Activated CD4-positive, alpha-beta memory T cell treated with anti-CD3 and anti-CD28 coated beads for 36 hours (primary cell): ENCODE measurements at regions of chr15 and their contacts with region 1.

Region 1: DNA sequence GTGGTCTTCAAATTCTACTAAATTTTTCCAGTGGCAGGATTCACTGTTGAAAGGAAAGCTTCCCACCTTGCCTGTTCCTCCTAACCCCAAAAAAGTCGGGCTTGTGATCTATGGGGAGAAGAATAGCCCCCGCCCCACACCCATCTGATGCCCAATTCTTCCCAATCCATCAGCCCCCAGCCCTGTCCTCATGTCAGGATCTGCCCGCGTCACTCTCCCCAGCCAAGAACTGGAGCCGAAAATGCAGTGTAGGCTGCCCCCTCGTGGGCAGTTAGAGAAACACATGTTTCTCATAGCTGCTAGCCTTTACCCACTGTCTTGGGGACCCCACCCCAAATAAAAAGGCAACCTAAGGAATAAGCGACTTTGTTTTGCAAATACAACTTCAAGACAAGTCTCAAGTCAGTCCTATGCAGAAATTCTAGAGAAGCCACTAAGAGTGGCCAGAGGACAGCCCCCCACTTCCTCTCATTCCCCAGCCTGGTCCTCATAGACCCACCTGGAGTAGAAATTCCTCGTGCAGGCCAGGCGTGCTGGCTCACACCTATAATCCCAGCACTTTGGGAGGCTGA is 13.0 kb upstream of the CSK start:
- DNase-seq: peak; percentile 80
- H3K4me3 Mint-ChIP-seq: no peak overlapping the region
- H3K27ac Mint-ChIP-seq: no peak overlapping the region
- H3K4me1 Mint-ChIP-seq: peaks cover 21% of the 10 kb centered on the region
- H3K27me3 Mint-ChIP-seq: peaks cover 5% of the 10 kb centered on the region

Region 2: DNA sequence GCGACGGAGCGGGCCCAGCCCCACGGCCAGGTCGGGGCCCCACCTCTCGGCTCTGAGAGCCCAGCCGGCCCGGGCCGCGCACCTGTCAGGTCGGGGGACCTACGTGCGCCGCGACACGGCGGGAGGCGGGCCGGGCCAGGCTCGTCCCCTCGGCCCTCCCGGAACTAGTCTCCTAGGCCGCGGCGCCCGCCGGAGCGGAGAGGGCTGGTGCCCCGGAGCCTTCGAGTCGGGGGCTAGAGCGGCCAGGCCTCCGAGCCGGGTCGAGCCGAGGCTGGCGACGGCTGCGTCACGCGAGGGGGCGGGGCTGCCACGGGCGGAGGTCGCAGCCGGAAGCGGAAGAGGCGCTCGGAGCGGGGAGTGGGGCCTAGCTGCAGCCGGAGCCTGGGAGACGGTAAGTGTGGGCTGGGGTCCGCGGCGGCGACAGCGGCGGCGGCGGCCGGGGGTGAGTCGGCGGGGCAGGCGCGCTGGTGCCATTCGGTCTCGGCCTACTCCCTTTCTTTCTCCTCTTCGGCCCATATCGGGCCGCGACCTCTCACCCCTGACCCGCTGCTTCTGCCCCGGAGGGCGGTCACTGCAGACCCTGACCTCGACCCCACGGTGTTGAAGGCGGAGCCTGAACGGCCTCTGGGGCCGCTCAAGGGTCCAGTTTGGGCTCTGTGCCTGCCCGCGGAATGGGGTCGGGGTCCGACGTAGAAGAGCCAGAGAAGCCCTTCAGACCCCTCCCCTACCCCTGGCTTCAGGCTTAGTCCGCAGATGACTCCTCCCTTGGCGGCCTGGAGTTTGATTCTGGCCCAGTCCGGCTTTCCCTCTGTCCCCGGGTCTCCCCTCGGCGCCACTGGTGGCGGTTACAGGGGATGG is 153.1 kb before region 1 on chr15 and contains the start of gene CLK3:
- CTCF ChIA-PET with region 1: interaction called, 88 read pairs
- POLR2A ChIA-PET with region 1: no interaction called
- intact Hi-C with region 1: no loop called
- DNase-seq: peak; percentile 97
- H3K4me3 Mint-ChIP-seq: peak within 1 kb of the TSS; percentile 91
- H3K27ac Mint-ChIP-seq: peak within 1 kb of the TSS; percentile 94
- H3K4me1 Mint-ChIP-seq: peaks cover 35% of the 10 kb centered on the region
- H3K27me3 Mint-ChIP-seq: no peaks in the 10 kb centered on the region
- total RNA-seq, gene CLK3: 118 to 124 TPM

Region 3: GRCh38 chr15:74723754-74724334 is 45.0 kb before region 1 on chr15:
- CTCF ChIA-PET with region 1: interaction called, 11 read pairs
- POLR2A ChIA-PET with region 1: interaction called, 4 read pairs
- intact Hi-C with region 1: no loop called
- DNase-seq: no peak
- H3K4me3 Mint-ChIP-seq: no peak overlapping the region
- H3K27ac Mint-ChIP-seq: no peak overlapping the region
- H3K4me1 Mint-ChIP-seq: peaks cover 8% of the 10 kb centered on the region
- H3K27me3 Mint-ChIP-seq: peaks cover 6% of the 10 kb centered on the region

Region 4: DNA sequence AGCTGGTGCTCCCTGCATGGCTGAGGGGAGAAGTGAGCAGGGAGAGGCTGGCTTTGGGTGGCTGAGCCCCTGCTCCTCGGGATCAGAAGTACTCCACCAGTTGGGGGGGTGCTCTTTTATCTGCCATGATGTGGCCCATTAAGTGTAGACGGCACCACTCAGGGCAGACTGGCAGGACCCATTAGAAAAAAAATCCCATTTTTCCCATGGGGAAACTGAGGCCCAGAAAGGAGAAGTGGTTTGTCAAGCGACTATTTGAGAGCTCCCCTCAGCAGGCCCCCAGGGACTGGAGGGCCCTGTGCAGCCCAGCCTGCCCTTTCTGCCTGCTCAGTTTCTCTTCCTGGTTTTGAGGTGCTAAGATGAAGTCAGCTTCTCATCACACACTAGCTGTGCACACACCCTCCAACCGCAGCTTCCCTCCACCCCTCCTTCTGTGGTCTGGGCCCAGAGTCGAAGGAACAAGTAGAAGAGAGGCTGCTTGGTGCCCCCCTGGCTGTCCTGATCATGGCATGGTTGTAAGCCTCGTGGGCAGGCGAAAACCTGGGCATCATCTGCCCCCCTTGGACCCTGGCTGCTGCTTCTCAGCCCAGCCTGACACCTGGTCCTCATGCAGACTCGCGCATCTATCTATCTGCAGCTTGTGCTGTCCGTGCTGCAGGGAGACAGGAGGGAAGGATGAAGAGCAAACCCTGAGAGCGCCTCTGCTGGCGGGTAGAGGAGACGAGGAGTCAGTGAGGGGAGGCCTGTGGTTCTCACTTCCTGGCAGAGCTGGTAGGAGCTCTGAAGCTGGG is 18.6 kb after region 1 on chr15:
- CTCF ChIA-PET with region 1: interaction called, 1,220 read pairs
- POLR2A ChIA-PET with region 1: interaction called, 13 read pairs
- intact Hi-C with region 1: loop called (anchors 2 kb)
- DNase-seq: peak; percentile 97
- H3K4me3 Mint-ChIP-seq: peak overlapping the region; percentile 90
- H3K27ac Mint-ChIP-seq: peak overlapping the region; percentile 99
- H3K4me1 Mint-ChIP-seq: peaks cover 53% of the 10 kb centered on the region
- H3K27me3 Mint-ChIP-seq: no peaks in the 10 kb centered on the region

Region 5: DNA sequence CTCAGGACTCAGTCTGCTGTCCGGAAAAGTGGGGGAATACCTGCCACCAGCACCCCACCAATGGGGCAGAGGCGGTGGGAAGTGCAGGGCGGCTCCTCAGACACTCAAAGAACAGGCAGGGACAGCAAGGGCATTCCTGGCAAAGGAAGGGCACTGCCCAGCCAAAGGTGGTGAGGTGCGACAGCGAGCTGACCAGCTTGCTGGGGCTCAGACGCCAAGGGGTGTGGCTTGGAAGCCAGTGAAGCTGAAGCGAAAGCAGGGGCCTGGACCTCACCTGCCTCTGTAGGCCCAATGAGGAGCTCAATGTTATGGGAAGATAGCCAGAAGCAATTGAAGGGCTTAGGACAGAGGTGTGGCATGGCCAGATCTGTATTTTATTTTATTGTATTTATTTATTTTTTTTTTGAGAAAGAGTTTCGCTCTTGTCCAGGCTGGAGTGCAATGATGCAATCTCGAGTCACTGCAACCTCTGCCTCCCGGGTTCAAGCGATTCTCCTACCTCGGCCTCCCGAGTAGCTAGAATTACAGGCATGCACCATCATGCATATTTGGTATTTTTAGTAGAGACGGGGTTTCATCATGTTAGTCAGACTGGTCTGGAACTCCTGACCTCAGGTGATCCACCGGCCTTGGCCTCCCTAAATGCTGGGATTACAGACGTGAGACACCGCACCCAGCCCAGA is 39.4 kb after region 1 on chr15:
- CTCF ChIA-PET with region 1: interaction called, 1,220 read pairs
- POLR2A ChIA-PET with region 1: interaction called, 3 read pairs
- intact Hi-C with region 1: no loop called
- DNase-seq: no peak
- H3K4me3 Mint-ChIP-seq: no peak overlapping the region
- H3K27ac Mint-ChIP-seq: peak overlapping the region; percentile 52
- H3K4me1 Mint-ChIP-seq: peaks cover 10% of the 10 kb centered on the region
- H3K27me3 Mint-ChIP-seq: no peaks in the 10 kb centered on the region

Region 6: GRCh38 chr15:74835307-74835823 is 66.5 kb after region 1 on chr15:
- CTCF ChIA-PET with region 1: interaction called, 44 read pairs
- POLR2A ChIA-PET with region 1: no interaction called
- intact Hi-C with region 1: no loop called
- DNase-seq: peak; percentile 70
- H3K4me3 Mint-ChIP-seq: no peak overlapping the region
- H3K27ac Mint-ChIP-seq: no peak overlapping the region
- H3K4me1 Mint-ChIP-seq: no peaks in the 10 kb centered on the region
- H3K27me3 Mint-ChIP-seq: no peaks in the 10 kb centered on the region

Region 7: DNA sequence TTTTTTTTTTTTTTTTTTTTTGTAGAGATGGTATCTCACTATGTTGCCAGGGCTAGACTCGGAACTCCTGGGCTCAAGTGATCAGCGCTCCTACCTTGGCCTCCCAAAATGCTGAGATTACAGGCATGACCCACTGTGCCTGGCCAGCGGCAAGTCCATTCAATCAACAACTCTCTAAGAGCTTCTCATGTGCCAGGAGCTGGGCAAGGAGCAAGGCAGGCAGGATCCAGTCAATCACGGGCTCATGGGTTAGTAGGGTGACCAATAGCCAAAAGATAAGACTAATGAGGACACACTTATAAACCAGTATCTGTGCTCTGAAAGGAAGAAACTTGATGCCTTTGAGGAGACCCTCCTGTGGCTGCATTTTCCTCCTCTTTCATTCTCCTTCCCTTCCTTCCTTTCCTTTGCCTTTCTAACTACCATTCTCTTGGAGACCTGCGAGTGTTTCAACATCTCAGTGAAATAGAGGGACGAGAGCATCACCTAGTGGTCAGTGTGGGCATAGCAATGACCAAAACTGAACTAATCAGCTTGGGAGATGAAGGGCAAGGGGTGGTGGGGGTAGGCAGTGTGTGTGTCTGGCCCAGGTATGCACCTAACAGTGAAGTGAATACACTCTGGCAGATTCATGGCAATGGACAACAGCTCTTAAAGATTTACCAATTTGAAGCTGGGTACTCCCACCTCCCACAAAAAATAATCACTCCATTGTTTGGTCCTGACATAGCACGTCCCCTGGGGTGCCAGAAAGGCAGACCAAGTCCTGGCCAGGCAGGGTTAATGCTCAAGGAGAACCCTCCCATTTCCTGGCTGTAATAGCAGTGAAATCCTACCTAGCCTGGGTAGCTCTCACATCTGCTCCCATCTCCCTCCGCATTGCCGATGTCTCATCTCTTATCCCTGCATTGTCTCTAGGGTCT is 181.5 kb after region 1 on chr15:
- CTCF ChIA-PET with region 1: interaction called, 84 read pairs
- POLR2A ChIA-PET with region 1: no interaction called
- intact Hi-C with region 1: loop called (anchors 1 kb)
- DNase-seq: peak; percentile 86
- H3K4me3 Mint-ChIP-seq: no peak overlapping the region
- H3K27ac Mint-ChIP-seq: no peak overlapping the region
- H3K4me1 Mint-ChIP-seq: peaks cover 9% of the 10 kb centered on the region
- H3K27me3 Mint-ChIP-seq: no peaks in the 10 kb centered on the region